Common myeloid progenitor, CD34-positive (primary cell): ENCODE measurements at regions of chr11 and their contacts with region 1.

Region 1: GRCh38 chr11:130434521-130435223 is 6.3 kb upstream of the ADAMTS8 start:
- DNase-seq: peak; percentile 76 to 86 (median 84)
- H3K4me3 ChIP-seq: peak overlapping the region; percentile 40 to 94 (median 81)
- H3K27ac ChIP-seq: no peak overlapping the region
- H3K4me1 ChIP-seq: peaks cover 1 to 20% (median 11%) of the 10 kb centered on the region in 4 experiments
- H3K27me3 ChIP-seq: peaks cover 4 to 16% (median 8%) of the 10 kb centered on the region in 5 experiments

Region 2: GRCh38 chr11:130397780-130398179 is 36.9 kb before region 1 on chr11:
- CTCF ChIA-PET with region 1: no interaction called
- POLR2A ChIA-PET with region 1: no interaction called
- DNase-seq: no peak
- H3K4me3 ChIP-seq: no peak overlapping the region
- H3K27ac ChIP-seq: no peak overlapping the region
- H3K4me1 ChIP-seq: peaks cover 0 to 26% (median 23%) of the 10 kb centered on the region in 4 experiments
- H3K27me3 ChIP-seq: peaks cover 0 to 4% (median 0%) of the 10 kb centered on the region in 5 experiments

Region 3: DNA sequence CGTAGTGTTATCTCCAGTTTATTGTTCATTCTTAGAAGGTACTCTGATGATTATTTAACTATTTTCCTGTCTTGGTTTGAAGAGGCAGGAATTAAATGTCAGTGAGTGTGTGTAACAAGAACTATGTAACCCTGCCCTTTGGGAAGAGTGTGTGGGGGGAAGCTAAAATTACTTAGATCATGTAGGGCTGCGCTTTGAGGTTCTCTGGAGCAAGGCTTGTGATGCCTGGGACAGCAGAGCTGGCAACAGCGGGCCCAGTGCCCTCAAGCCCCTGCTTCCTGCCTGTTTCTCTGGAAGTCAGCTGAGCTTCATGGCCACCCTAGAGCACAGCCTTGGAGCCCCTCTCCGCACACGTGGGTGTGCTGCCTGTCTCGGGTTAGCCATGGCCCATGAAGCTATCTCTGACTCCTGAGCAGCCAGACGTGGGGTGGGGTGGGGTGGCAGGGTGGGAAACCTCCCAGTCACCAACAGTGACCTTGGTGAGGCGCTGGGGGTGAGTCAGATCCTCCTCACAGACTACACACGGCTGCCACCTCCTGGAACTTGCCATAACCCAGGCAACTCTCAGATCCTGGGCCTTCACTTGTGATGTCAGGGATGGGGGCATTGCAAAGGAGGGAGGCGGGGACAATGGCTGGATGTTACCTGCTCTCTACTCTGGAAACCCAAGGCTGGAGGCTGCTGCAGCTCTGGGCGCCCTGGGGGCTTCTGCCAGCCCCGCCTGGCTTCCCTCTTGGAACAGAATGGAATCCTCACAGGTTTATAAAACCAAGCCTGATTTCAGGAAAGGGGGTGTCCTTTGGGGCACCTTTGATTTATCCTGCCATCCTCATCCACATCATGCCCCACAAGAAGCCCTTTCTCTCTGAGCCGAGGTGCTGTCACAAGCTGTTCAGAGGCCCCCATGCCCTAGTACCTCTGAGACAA is 393.0 kb after region 1 on chr11:
- CTCF ChIA-PET with region 1: interaction called, 42 read pairs
- POLR2A ChIA-PET with region 1: no interaction called
- DNase-seq: peak; percentile 31 to 67 (median 64)
- H3K4me3 ChIP-seq: no peak overlapping the region
- H3K27ac ChIP-seq: no peak overlapping the region
- H3K4me1 ChIP-seq: no peaks in the 10 kb centered on the region
- H3K27me3 ChIP-seq: peaks cover 0 to 15% (median 1%) of the 10 kb centered on the region in 5 experiments

Region 4: DNA sequence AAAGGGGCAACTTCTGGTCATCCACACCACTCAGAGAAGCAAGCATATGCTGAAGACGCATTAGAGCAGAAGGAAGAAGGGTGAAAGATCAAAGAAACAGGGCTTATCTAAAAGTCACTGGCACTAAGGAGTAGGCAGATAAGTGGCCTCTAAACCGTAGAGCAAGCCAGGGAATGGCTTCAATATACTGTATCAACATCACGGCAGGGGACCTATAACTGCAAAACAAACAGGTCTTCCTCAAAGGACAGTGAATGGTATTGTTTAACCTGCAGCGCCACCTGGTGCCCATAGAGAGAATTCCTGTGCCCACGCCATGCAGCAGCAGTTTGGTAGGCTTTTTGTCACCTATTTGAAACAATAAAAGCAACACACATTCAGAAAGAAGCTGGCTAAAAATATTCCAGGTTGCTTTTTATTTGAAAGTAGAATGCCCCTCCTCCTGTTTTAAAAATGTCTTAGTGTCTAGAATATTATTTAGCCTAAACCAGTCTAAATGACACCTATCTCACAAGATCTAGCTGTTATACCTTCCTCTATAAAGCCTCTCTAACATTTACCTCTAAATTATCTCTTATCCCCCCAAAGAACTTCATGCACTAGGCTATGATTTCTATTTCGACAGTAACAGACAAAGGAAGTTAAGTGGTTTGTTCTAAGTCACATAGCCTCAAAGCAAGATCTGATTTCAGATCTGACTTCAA is 459.8 kb after region 1 on chr11:
- CTCF ChIA-PET with region 1: interaction called, 35 read pairs
- POLR2A ChIA-PET with region 1: no interaction called
- DNase-seq: peak; percentile 55 to 81 (median 78)
- H3K4me3 ChIP-seq: no peak overlapping the region
- H3K27ac ChIP-seq: no peak overlapping the region
- H3K4me1 ChIP-seq: no peaks in the 10 kb centered on the region
- H3K27me3 ChIP-seq: no peaks in the 10 kb centered on the region

Region 5: DNA sequence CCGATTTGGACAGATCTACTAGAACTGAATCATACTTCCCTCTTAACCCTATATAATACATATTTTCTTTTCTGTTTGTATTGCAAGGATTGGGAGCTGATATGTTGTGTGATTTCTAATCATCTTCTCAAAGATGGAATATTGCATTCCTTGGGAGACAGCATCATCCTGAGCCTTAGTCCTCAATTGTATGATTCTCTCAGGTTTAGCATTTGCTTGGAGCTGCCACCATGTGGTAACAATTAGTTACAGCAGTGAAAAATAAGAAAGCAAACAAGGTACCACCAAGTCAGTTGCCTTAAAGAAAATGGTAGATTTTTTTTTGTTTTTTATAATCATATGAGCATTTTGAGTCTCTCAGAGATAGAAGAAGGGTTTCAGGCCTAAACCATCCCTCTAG is 469.7 kb after region 1 on chr11:
- CTCF ChIA-PET with region 1: interaction called, 35 read pairs
- POLR2A ChIA-PET with region 1: no interaction called
- DNase-seq: peak in 1 of 3 donors; percentile 18
- H3K4me3 ChIP-seq: no peak overlapping the region
- H3K27ac ChIP-seq: no peak overlapping the region
- H3K4me1 ChIP-seq: no peaks in the 10 kb centered on the region
- H3K27me3 ChIP-seq: no peaks in the 10 kb centered on the region